ENCODE measurements at regions of chr21 and their contacts with region 1.

Region 1: GRCh38 chr21:21373969-21374368 is 375.8 kb downstream of the NCAM2 start:
- DNase-seq: no peak
- ATAC-seq: no peak
- H3K4me3 ChIP-seq: no peak overlapping the region
- H3K27ac ChIP-seq: no peak overlapping the region
- H3K4me1 ChIP-seq: no peaks in the 10 kb centered on the region
- H3K27me3 ChIP-seq: no peaks in the 10 kb centered on the region
- CTCF ChIP-seq: no peak; the same call in 1 of the 2 replicates

Region 2: DNA sequence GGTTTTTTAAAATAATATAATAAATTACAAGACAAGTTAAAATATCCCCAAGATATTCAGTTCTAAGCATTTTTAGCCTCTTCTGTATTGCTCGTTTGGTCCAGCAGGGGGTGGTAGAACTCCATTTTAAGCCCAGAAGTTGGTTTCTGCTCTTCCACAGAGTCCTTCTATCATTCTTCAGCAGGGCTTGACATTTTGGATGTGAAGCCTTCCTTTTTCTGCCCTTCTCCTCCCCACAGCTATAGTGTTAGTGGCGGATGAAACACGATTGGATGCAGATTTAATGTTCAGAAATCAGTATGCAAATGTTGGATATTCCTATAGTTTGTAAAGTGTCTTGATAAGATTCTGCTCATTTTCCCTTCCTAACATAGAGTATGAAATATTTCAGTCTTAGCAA is 374.3 kb before region 1 on chr21:
- CTCF ChIA-PET with region 1: no interaction called
- POLR2A ChIA-PET with region 1: no interaction called
- in situ Hi-C with region 1: no loop called
- intact Hi-C with region 1: loop called (anchors 10 kb)
- DNase-seq: no peak
- ATAC-seq: no peak
- H3K4me3 ChIP-seq: no peak overlapping the region
- H3K27ac ChIP-seq: no peak overlapping the region
- H3K4me1 ChIP-seq: no peaks in the 10 kb centered on the region
- H3K27me3 ChIP-seq: no peaks in the 10 kb centered on the region; the same call in 1 of the 2 replicates
- CTCF ChIP-seq: peak; percentile 77

Region 3: DNA sequence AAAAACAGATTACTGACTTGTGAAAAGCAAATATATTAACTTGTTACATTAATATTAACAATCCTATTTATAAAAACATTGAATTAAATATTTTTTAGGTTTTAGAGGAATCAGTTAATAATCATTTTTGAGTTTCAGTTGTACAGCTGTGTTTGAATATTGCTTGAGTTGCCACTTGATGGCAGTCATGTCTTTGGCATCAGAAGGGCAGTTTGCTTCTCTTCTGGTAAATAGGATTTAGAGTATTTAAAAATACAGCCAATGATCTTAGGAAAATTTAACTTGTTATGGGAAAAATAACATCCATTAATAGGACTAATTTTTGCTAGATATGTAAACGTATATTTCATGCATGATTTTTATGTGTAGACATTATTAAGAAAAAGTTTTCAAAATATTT is 141.6 kb before region 1 on chr21:
- CTCF ChIA-PET with region 1: no interaction called
- POLR2A ChIA-PET with region 1: no interaction called
- in situ Hi-C with region 1: no loop called
- intact Hi-C with region 1: no loop called
- DNase-seq: peak; percentile 2
- ATAC-seq: no peak
- H3K4me3 ChIP-seq: no peak overlapping the region
- H3K27ac ChIP-seq: no peak overlapping the region
- H3K4me1 ChIP-seq: no peaks in the 10 kb centered on the region
- H3K27me3 ChIP-seq: no peaks in the 10 kb centered on the region
- CTCF ChIP-seq: peak; percentile 40; the same call in 1 of the 2 replicates

Region 4: DNA sequence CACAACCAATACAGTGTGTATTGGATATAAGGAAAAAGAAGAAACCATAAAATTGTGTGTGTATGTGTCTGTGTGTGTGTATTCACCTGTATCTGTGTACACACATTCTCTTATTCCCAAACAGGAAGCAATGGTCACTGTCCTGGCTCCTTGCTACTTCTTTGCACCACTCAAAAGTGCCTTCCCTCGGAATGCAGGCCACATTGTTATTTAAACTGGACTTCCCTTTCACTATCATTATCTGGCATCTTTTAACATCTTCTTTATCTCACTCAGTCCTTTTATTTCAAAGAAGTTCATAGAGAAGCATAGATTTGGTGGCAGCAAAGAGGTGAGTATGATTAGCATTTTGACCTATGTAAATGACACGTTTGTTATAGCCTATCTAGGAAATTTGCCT is 428.0 kb after region 1 on chr21:
- CTCF ChIA-PET with region 1: no interaction called
- POLR2A ChIA-PET with region 1: no interaction called
- in situ Hi-C with region 1: no loop called
- intact Hi-C with region 1: no loop called
- DNase-seq: no peak
- ATAC-seq: no peak
- H3K4me3 ChIP-seq: no peak overlapping the region
- H3K27ac ChIP-seq: no peak overlapping the region
- H3K4me1 ChIP-seq: no peaks in the 10 kb centered on the region
- H3K27me3 ChIP-seq: no peaks in the 10 kb centered on the region
- CTCF ChIP-seq: no peak